Activated CD4-positive, alpha-beta T cell treated with anti-CD3 and anti-CD28 coated beads for 36 hours (primary cell): ENCODE measurements at regions of chr17 and their contacts with region 1.

Region 1: GRCh38 chr17:7572588-7573323 is 6.7 kb upstream of the CD68 start:
- DNase-seq: peak; percentile 100
- ATAC-seq: peak; percentile 92
- H3K4me3 Mint-ChIP-seq: peak overlapping the region; percentile 94
- H3K27ac Mint-ChIP-seq: peak overlapping the region; percentile 99
- H3K4me1 Mint-ChIP-seq: peaks cover 51% of the 10 kb centered on the region
- H3K27me3 Mint-ChIP-seq: no peaks in the 10 kb centered on the region

Region 2: GRCh38 chr17:7252176-7253043 is 320.3 kb before region 1 on chr17 and contains the start of gene ELP5:
- CTCF ChIA-PET with region 1: no interaction called
- POLR2A ChIA-PET with region 1: no interaction called
- intact Hi-C with region 1: loop called (anchors 1 to 5 kb)
- DNase-seq: peak; percentile 94
- ATAC-seq: peak; percentile 65
- H3K4me3 Mint-ChIP-seq: peak within 1 kb of the TSS; percentile 93
- H3K27ac Mint-ChIP-seq: peak within 1 kb of the TSS; percentile 99
- H3K4me1 Mint-ChIP-seq: peaks cover 40% of the 10 kb centered on the region
- H3K27me3 Mint-ChIP-seq: no peaks in the 10 kb centered on the region
- total RNA-seq, gene ELP5: 58.1 to 62.3 TPM

Region 3: GRCh38 chr17:7383742-7384488 is 188.8 kb before region 1 on chr17:
- CTCF ChIA-PET with region 1: no interaction called
- POLR2A ChIA-PET with region 1: no interaction called
- intact Hi-C with region 1: no loop called
- DNase-seq: peak; percentile 87
- ATAC-seq: peak; percentile 97
- H3K4me3 Mint-ChIP-seq: peak overlapping the region; percentile 73
- H3K27ac Mint-ChIP-seq: peak overlapping the region; percentile 70
- H3K4me1 Mint-ChIP-seq: peaks cover 10% of the 10 kb centered on the region
- H3K27me3 Mint-ChIP-seq: peaks cover 31% of the 10 kb centered on the region

Region 4: DNA sequence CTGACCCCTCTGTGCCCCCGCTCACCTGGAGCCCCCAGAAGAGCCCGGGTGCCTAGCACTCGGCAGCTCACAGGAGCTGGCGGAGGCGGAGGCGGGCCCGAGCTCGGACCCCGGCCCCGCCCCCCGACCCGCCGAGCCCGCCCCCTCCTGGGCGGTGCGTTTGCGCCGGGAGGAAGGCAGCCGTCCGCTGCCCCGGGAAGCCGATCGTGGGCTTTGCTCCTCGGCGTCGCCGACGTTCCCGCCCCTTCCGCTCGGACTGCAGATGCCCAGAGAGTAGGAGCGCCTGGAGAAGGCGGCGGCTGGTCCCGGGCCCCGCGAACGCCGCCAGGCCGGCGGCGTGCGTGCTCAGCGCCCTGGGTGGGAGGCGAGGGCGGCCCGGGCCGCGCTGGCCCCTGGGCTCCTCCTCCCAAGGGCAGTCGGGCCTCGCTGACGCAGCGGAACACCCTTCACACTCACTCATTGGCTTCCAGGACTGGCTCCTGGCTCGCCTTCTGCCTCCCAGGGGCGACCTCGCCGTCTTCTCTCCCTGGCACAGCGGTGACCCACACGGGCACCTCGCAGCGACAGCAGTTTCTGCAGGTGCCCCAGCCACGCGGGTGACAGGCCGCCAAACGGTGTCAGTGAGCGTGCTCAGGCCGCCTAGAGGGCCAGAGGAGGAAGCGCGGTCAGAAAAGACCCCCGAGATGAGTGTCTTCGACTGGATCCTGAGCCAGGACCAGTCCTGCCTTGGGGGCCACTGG is 178.1 kb before region 1 on chr17 and contains the start of gene PLSCR3:
- CTCF ChIA-PET with region 1: interaction called, 4 read pairs
- POLR2A ChIA-PET with region 1: no interaction called
- intact Hi-C with region 1: loop called in 1 of 2 experiments (anchors 1 kb)
- DNase-seq: peak; percentile 90
- ATAC-seq: peak; percentile 86
- H3K4me3 Mint-ChIP-seq: peak within 1 kb of the TSS; percentile 88
- H3K27ac Mint-ChIP-seq: peak within 1 kb of the TSS; percentile 95
- H3K4me1 Mint-ChIP-seq: peaks cover 26% of the 10 kb centered on the region
- H3K27me3 Mint-ChIP-seq: no peaks in the 10 kb centered on the region
- total RNA-seq, gene PLSCR3: 69.3 to 78.9 TPM

Region 5: GRCh38 chr17:7583253-7584109 is 10.7 kb after region 1 on chr17 and contains the start of gene MPDU1:
- CTCF ChIA-PET with region 1: interaction called, 10 read pairs
- POLR2A ChIA-PET with region 1: interaction called, 43 read pairs
- intact Hi-C with region 1: loop called (anchors 1 kb)
- DNase-seq: peak; percentile 98
- ATAC-seq: peak; percentile 77
- H3K4me3 Mint-ChIP-seq: peak within 1 kb of the TSS; percentile 82
- H3K27ac Mint-ChIP-seq: peak within 1 kb of the TSS; percentile 100
- H3K4me1 Mint-ChIP-seq: peaks cover 56% of the 10 kb centered on the region
- H3K27me3 Mint-ChIP-seq: no peaks in the 10 kb centered on the region
- total RNA-seq, gene MPDU1: 51.7 to 77.0 TPM

Region 6: GRCh38 chr17:7887482-7888183 is 314.9 kb after region 1 on chr17:
- CTCF ChIA-PET with region 1: no interaction called
- POLR2A ChIA-PET with region 1: interaction called, 4 read pairs
- intact Hi-C with region 1: loop called in 1 of 2 experiments (anchors 2 kb)
- DNase-seq: peak; percentile 94
- ATAC-seq: peak; percentile 79
- H3K4me3 Mint-ChIP-seq: no peak overlapping the region
- H3K27ac Mint-ChIP-seq: no peak overlapping the region
- H3K4me1 Mint-ChIP-seq: peaks cover 4% of the 10 kb centered on the region
- H3K27me3 Mint-ChIP-seq: no peaks in the 10 kb centered on the region